Activated CD4-positive, alpha-beta memory T cell treated with anti-CD3 and anti-CD28 coated beads for 36 hours (primary cell): ENCODE measurements at regions of chr1 and their contacts with region 1.

Region 1: GRCh38 chr1:109277434-109278204 is 5.3 kb downstream of the PSRC1 start:
- DNase-seq: peak; percentile 83
- H3K4me3 Mint-ChIP-seq: no peak overlapping the region
- H3K27ac Mint-ChIP-seq: no peak overlapping the region
- H3K4me1 Mint-ChIP-seq: peaks cover 8% of the 10 kb centered on the region
- H3K27me3 Mint-ChIP-seq: no peaks in the 10 kb centered on the region

Region 2: DNA sequence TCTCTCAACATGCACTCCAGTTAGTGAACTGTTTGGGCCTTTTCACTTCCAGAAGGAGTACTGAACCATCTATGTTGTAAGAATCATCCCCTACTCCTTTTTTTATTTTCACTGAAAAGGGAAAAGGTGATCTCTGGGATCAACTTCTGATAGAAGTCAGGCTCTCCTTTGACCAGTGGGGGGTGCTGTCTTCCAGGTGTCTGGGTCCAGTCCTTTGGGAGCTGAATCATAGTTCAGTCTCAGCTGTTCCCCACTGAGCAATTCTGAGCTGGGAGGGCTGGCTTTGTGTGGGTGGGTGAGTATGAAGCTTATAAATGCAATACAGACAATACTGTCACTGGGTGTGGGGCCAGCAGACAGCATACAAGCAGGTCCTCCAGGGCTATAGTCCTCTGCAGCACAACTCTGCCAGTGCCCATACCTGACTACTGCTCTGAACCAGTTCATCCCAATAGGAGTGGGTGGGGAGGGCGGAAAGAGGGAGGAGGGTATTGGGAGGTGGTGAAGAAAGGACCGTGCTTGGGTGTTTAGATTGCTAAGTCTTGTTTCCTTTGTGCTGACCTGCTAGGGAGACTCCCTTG is 76.4 kb before region 1 on chr1:
- CTCF ChIA-PET with region 1: interaction called, 10 read pairs
- POLR2A ChIA-PET with region 1: no interaction called
- intact Hi-C with region 1: loop called (anchors 10 kb)
- DNase-seq: peak; percentile 88
- H3K4me3 Mint-ChIP-seq: no peak overlapping the region
- H3K27ac Mint-ChIP-seq: no peak overlapping the region
- H3K4me1 Mint-ChIP-seq: peaks cover 22% of the 10 kb centered on the region
- H3K27me3 Mint-ChIP-seq: no peaks in the 10 kb centered on the region

Region 3: GRCh38 chr1:109263597-109264398 is 13.8 kb before region 1 on chr1:
- CTCF ChIA-PET with region 1: interaction called, 13 read pairs
- POLR2A ChIA-PET with region 1: no interaction called
- intact Hi-C with region 1: no loop called
- DNase-seq: peak; percentile 86
- H3K4me3 Mint-ChIP-seq: no peak overlapping the region
- H3K27ac Mint-ChIP-seq: no peak overlapping the region
- H3K4me1 Mint-ChIP-seq: peaks cover 1% of the 10 kb centered on the region
- H3K27me3 Mint-ChIP-seq: no peaks in the 10 kb centered on the region